ENCODE measurements at regions of chr16 and their contacts with region 1.

Region 1: GRCh38 chr16:2023098-2023925 is 3.4 kb upstream of the NHERF2 start:
- DNase-seq: peak; percentile 88 to 96 (median 92)
- H3K4me3 ChIP-seq: peak overlapping the region in 57 of 59 donors; percentile 7 to 65 (median 43)
- H3K27ac ChIP-seq: peak overlapping the region in 31 of 59 donors; percentile 7 to 81 (median 51)
- H3K27me3 ChIP-seq: peaks cover 3 to 37% (median 25%) of the 10 kb centered on the region in 45 donors
- CTCF ChIP-seq: peak; percentile 61 to 100 (median 97)

Region 2: GRCh38 chr16:1839554-1839953 is 183.8 kb before region 1 on chr16:
- intact Hi-C with region 1: no loop called
- DNase-seq: no peak
- H3K4me3 ChIP-seq: no peak overlapping the region
- H3K27ac ChIP-seq: no peak overlapping the region
- H3K27me3 ChIP-seq: no peaks in the 10 kb centered on the region
- CTCF ChIP-seq: no peak

Region 3: GRCh38 chr16:2056681-2057407 is 33.5 kb after region 1 on chr16:
- intact Hi-C with region 1: loop called (anchors 5 kb)
- DNase-seq: peak in 5 of 10 donors; percentile 40 to 77 (median 52)
- H3K4me3 ChIP-seq: no peak overlapping the region
- H3K27ac ChIP-seq: peak overlapping the region in 55 of 59 donors; percentile 14 to 93 (median 75)
- H3K27me3 ChIP-seq: no peaks in the 10 kb centered on the region
- CTCF ChIP-seq: peak in 47 of 56 donors; percentile 8 to 78 (median 43)

Region 4: DNA sequence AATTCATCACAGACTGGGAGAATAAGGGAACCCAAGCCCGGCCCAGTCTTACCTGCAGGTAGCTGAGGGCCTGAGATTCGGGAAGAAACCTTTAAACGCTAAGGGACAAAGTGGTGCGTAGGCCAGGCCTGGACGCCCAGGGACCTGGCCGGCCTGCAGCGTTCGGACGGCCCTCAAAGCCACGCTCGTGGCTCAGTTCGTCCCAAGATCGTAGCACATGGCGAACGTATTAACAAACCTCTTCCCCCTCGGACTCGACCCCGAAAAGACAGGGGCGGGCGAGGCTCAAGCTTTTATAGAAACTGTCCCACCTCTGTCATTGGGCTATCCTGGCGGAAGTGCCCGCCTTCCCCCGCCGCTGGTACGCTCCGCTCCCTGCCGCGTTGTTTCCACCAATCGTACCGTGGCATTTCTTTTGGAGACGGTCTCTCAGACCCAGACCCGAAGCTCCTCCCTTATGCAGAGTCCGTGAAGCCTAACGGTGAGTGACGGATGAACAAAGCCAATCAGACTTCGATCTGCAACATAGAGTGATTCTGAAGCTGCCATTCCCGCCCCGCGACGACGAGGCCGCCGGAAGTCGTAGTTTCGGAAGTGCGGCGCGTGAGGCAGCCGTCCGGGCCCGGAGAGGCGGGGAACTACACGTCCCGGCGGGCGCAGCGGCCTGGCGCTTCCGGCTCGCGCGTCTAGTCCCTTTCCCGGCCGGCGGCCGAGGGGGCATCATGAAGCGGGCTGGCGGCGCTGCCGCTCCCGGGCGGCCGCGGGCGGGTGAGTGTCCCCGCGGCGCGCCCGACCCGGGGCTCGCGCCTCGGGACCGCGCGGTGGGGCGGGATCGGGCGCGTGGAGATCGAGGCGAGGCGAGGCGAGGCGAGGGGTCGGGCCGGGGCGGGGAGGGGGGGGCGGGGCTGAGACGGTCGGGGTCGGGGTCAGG is 132.0 kb after region 1 on chr16 and contains the start of gene TRAF7:
- intact Hi-C with region 1: loop called (anchors 1 kb)
- DNase-seq: peak; percentile 95 to 100 (median 99)
- H3K4me3 ChIP-seq: peak within 1 kb of the TSS; percentile 57 to 99 (median 90)
- H3K27ac ChIP-seq: peak within 1 kb of the TSS in 57 of 59 donors; percentile 22 to 94 (median 82)
- H3K27me3 ChIP-seq: no peaks in the 10 kb centered on the region
- CTCF ChIP-seq: peak in 26 of 56 donors; percentile 7 to 67 (median 28)
- total RNA-seq, gene TRAF7: 26.2 to 67.2 (median 41.0) TPM